CD8-positive, alpha-beta T cell (primary cell): ENCODE measurements at regions of chr3 and their contacts with region 1.

Region 1: GRCh38 chr3:45688882-45689756 is at the start of gene SACM1L:
- DNase-seq: peak; percentile 88 to 99 (median 94)
- ATAC-seq: peak; percentile 85
- H3K4me3 ChIP-seq: peak within 1 kb of the TSS; percentile 66 to 84
- H3K4me3 Mint-ChIP-seq: peak within 1 kb of the TSS; percentile 86
- H3K27ac ChIP-seq: peak within 1 kb of the TSS; percentile 89 to 94
- H3K27ac Mint-ChIP-seq: peak within 1 kb of the TSS; percentile 98
- H3K4me1 ChIP-seq: peaks cover 41% of the 10 kb centered on the region
- H3K4me1 Mint-ChIP-seq: peaks cover 60% of the 10 kb centered on the region
- H3K27me3 ChIP-seq: no peaks in the 10 kb centered on the region
- H3K27me3 Mint-ChIP-seq: peaks cover 3% of the 10 kb centered on the region
- CTCF ChIP-seq: no peak
- total RNA-seq, gene SACM1L: 54.4 to 56.7 TPM

Region 2: GRCh38 chr3:44338010-44338827 is 1350.9 kb before region 1 on chr3 and contains the start of gene TCAIM:
- CTCF ChIA-PET with region 1: no interaction called
- POLR2A ChIA-PET with region 1: no interaction called
- intact Hi-C with region 1: loop called in 1 of 2 experiments (anchors 10 kb)
- DNase-seq: peak; percentile 97 to 100 (median 99)
- ATAC-seq: peak; percentile 92
- H3K4me3 ChIP-seq: peak within 1 kb of the TSS; percentile 76 to 91
- H3K4me3 Mint-ChIP-seq: peak within 1 kb of the TSS; percentile 93
- H3K27ac ChIP-seq: peak within 1 kb of the TSS; percentile 88 to 93
- H3K27ac Mint-ChIP-seq: peak within 1 kb of the TSS; percentile 97
- H3K4me1 ChIP-seq: peaks cover 15% of the 10 kb centered on the region
- H3K4me1 Mint-ChIP-seq: peaks cover 32% of the 10 kb centered on the region
- H3K27me3 ChIP-seq: no peaks in the 10 kb centered on the region
- H3K27me3 Mint-ChIP-seq: peaks cover 6% of the 10 kb centered on the region
- CTCF ChIP-seq: no peak
- total RNA-seq, gene TCAIM: 3.1 to 3.7 TPM

Region 3: GRCh38 chr3:45665101-45665572 is 24.0 kb before region 1 on chr3:
- CTCF ChIA-PET with region 1: interaction called, 16 read pairs
- POLR2A ChIA-PET with region 1: interaction called, 5 read pairs
- intact Hi-C with region 1: loop called (anchors 1 kb)
- DNase-seq: peak; percentile 30 to 87 (median 64)
- ATAC-seq: peak; percentile 43
- H3K4me3 ChIP-seq: peak overlapping the region; percentile 60 to 63
- H3K4me3 Mint-ChIP-seq: peak overlapping the region; percentile 90
- H3K27ac ChIP-seq: peak overlapping the region; percentile 60 to 61
- H3K27ac Mint-ChIP-seq: peak overlapping the region; percentile 92
- H3K4me1 ChIP-seq: peaks cover 19% of the 10 kb centered on the region
- H3K4me1 Mint-ChIP-seq: peaks cover 25% of the 10 kb centered on the region
- H3K27me3 ChIP-seq: no peaks in the 10 kb centered on the region
- H3K27me3 Mint-ChIP-seq: no peaks in the 10 kb centered on the region
- CTCF ChIP-seq: peak; percentile 56

Region 4: GRCh38 chr3:45705839-45706808 is 17.0 kb after region 1 on chr3:
- CTCF ChIA-PET with region 1: interaction called, 6 read pairs
- POLR2A ChIA-PET with region 1: interaction called, 21 read pairs
- intact Hi-C with region 1: loop called in 1 of 2 experiments (anchors 2 kb)
- DNase-seq: no peak
- ATAC-seq: no peak
- H3K4me3 ChIP-seq: no peak overlapping the region
- H3K4me3 Mint-ChIP-seq: no peak overlapping the region
- H3K27ac ChIP-seq: no peak overlapping the region
- H3K27ac Mint-ChIP-seq: peak overlapping the region; percentile 34
- H3K4me1 ChIP-seq: peaks cover 23% of the 10 kb centered on the region
- H3K4me1 Mint-ChIP-seq: peaks cover 50% of the 10 kb centered on the region
- H3K27me3 ChIP-seq: no peaks in the 10 kb centered on the region
- H3K27me3 Mint-ChIP-seq: no peaks in the 10 kb centered on the region
- CTCF ChIP-seq: no peak

Region 5: DNA sequence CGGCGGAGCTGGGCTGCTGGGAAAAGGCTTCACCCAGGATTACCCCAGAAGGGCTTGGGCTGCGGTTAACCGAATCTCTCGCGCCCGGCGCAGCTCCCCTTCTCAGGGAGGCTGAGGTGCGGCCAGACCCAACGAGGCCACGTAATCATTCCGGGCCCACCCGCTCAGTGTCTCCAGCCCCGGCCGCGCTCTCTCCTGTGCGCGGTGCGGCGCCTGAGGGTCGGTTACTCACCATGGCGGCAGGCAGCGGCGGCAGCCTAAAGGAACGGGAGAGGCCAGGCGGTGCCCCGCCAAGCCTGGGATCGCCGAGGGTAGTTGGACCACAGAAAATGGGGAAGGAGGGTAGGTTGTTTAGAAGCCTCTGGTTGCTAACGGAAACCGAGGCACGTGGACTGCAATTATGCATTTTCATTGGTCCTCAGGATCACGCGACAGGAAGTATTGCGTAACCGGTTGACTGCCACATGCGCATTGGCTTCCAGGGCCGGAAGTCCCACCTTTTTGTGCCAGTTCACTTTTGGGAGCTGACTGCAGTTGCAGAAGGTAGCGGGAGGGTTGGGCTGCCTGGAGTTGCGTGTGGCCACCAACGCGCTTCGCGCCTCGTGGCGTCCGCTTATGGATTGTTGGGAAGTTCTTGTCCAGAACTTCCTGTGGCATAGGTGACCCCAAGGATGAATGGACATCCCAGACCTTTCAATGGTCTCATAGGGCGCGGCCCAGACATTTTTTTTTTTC is 152.8 kb after region 1 on chr3 and contains the start of gene LZTFL1:
- CTCF ChIA-PET with region 1: no interaction called
- POLR2A ChIA-PET with region 1: no interaction called
- intact Hi-C with region 1: loop called (anchors 5 kb)
- DNase-seq: peak; percentile 74 to 97 (median 91)
- ATAC-seq: peak; percentile 83
- H3K4me3 ChIP-seq: peak within 1 kb of the TSS; percentile 88 to 89
- H3K4me3 Mint-ChIP-seq: peak within 1 kb of the TSS; percentile 96
- H3K27ac ChIP-seq: peak within 1 kb of the TSS; percentile 89 to 93
- H3K27ac Mint-ChIP-seq: peak within 1 kb of the TSS; percentile 96
- H3K4me1 ChIP-seq: peaks cover 11% of the 10 kb centered on the region
- H3K4me1 Mint-ChIP-seq: peaks cover 16% of the 10 kb centered on the region
- H3K27me3 ChIP-seq: no peaks in the 10 kb centered on the region
- H3K27me3 Mint-ChIP-seq: no peaks in the 10 kb centered on the region
- CTCF ChIP-seq: no peak
- total RNA-seq, gene LZTFL1: 10.0 TPM

Region 6: GRCh38 chr3:46065294-46065721 is 376.2 kb after region 1 on chr3:
- CTCF ChIA-PET with region 1: no interaction called
- POLR2A ChIA-PET with region 1: no interaction called
- intact Hi-C with region 1: loop called in 1 of 2 experiments (anchors 10 kb)
- DNase-seq: peak; percentile 62 to 97 (median 79)
- ATAC-seq: peak; percentile 87
- H3K4me3 ChIP-seq: no peak overlapping the region
- H3K4me3 Mint-ChIP-seq: peak overlapping the region; percentile 37
- H3K27ac ChIP-seq: peak overlapping the region in 1 of 2 experiments; percentile 63
- H3K27ac Mint-ChIP-seq: peak overlapping the region; percentile 88
- H3K4me1 ChIP-seq: peaks cover 78% of the 10 kb centered on the region
- H3K4me1 Mint-ChIP-seq: peaks cover 76% of the 10 kb centered on the region
- H3K27me3 ChIP-seq: no peaks in the 10 kb centered on the region
- H3K27me3 Mint-ChIP-seq: no peaks in the 10 kb centered on the region
- CTCF ChIP-seq: no peak

Region 7: DNA sequence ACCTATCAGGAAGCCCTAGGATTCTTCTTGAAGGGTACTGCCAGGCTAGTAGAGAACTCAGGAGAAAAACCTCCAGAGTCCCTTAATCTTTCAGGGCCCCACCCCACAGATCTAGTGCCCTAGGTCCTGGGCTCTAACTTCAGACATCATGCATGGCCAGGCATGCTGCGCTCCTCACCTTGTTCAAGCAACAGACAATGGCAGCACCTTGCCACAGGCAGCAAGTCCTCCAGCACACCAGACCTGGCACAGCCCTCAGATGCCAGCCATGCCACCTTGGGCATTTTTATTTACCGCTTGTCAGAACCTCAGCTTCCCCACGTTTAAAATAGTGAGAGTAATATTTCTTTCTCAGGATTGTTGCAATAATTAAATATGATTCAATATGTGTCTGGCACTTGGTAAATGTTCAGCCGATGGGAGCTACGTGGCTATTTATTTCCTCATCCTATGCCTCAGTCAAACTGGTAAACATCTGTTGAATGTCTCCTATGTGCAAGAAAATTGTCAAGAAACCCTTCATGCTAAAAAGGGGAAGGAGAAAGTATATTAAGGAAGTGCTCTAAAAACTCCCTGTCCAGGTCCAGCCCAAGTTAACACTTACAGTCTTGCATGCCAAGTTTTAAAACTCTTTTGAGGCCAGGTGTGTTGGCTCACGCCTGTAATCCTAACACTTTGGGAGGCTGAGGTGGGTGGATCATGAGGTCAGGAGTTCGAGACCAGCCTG is 533.5 kb after region 1 on chr3:
- CTCF ChIA-PET with region 1: no interaction called
- POLR2A ChIA-PET with region 1: no interaction called
- intact Hi-C with region 1: no loop called
- DNase-seq: no peak
- ATAC-seq: no peak
- H3K4me3 ChIP-seq: no peak overlapping the region
- H3K4me3 Mint-ChIP-seq: no peak overlapping the region
- H3K27ac ChIP-seq: no peak overlapping the region
- H3K27ac Mint-ChIP-seq: no peak overlapping the region
- H3K4me1 ChIP-seq: no peaks in the 10 kb centered on the region
- H3K4me1 Mint-ChIP-seq: no peaks in the 10 kb centered on the region
- H3K27me3 ChIP-seq: no peaks in the 10 kb centered on the region
- H3K27me3 Mint-ChIP-seq: no peaks in the 10 kb centered on the region
- CTCF ChIP-seq: no peak